Esophagus squamous epithelium (tissue), 5 donors: ENCODE measurements at regions of chr17 and their contacts with region 1.

Region 1: DNA sequence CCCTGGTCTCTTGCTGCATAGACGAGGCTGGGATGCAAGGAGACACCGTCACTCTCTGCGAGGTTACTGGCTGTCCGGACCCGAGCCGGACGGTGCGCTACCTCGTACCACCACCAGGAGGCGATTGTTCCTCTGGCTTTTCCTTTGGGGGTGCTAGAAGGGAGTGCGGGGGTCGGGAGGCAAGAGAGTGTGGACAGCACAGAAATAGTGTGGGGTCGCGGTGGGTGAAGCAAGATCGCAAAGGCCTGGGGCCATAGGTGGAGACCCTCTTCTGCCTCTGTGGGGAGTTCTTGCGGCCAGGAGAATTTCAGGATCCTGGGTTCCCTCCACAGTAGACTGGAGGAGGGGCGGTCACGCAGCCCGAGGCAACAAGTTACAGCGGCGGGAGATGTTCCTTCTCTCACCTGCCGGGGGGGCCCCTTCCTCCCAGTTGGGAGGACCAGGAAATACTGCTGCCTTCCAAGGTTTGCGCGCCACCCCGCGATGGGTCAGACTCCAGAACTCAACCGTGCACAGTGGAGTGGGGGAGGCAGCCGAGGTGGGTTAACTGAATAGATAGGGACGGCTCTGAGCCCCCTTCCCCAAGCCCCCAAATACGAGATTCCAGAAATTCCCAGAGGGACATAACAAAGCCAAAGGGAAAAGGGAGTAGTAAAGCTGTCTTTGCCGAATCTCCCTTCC is 6.9 kb downstream of the PHOSPHO1 start:
- DNase-seq: no peak
- H3K4me3 ChIP-seq: peak overlapping the region in 3 of 4 donors; percentile 3 to 51 (median 30)
- H3K27ac ChIP-seq: no peak overlapping the region
- H3K4me1 ChIP-seq: peaks cover 4 to 42% (median 13%) of the 10 kb centered on the region in 3 donors
- H3K27me3 ChIP-seq: peaks cover 7 to 99% (median 11%) of the 10 kb centered on the region in 4 donors
- CTCF ChIP-seq: peak; percentile 62 to 85 (median 75)
- POLR2A ChIP-seq: no peak

Region 2: GRCh38 chr17:49180303-49180702 is 43.4 kb before region 1 on chr17:
- intact Hi-C with region 1: loop called (anchors 5 kb)
- DNase-seq: no peak
- H3K4me3 ChIP-seq: no peak overlapping the region
- H3K27ac ChIP-seq: no peak overlapping the region
- H3K4me1 ChIP-seq: no peaks in the 10 kb centered on the region
- H3K27me3 ChIP-seq: peaks cover 0 to 31% (median 0%) of the 10 kb centered on the region in 4 donors
- CTCF ChIP-seq: peak; percentile 63 to 79 (median 70)
- POLR2A ChIP-seq: no peak